ENCODE measurements at regions of chrX and their contacts with region 1.

Region 1: GRCh38 chrX:103175944-103176753 is 38.8 kb upstream of the BEX4 start:
- DNase-seq: no peak
- ATAC-seq: no peak
- H3K4me3 ChIP-seq: no peak overlapping the region
- H3K27ac ChIP-seq: no peak overlapping the region
- H3K4me1 ChIP-seq: no peaks in the 10 kb centered on the region
- H3K27me3 ChIP-seq: peaks cover 0 to 6% (median 4%) of the 10 kb centered on the region in 3 donors
- CTCF ChIP-seq: peak in 4 of 5 experiments; percentile 18 to 56 (median 35)
- POLR2A ChIP-seq: no peak

Region 2: GRCh38 chrX:102950908-102951866 is 225.0 kb before region 1 on chrX:
- in situ Hi-C with region 1: loop called in 2 of 4 experiments (anchors 10 to 25 kb)
- intact Hi-C with region 1: loop called (anchors 5 kb)
- DNase-seq: no peak
- ATAC-seq: no peak
- H3K4me3 ChIP-seq: peak overlapping the region in 1 of 4 donors; percentile 21
- H3K27ac ChIP-seq: no peak overlapping the region
- H3K4me1 ChIP-seq: peaks cover 0 to 4% of the 10 kb centered on the region in 2 donors
- H3K27me3 ChIP-seq: no peaks in the 10 kb centered on the region
- CTCF ChIP-seq: peak in 2 of 5 experiments; percentile 30 to 58
- POLR2A ChIP-seq: no peak

Region 3: DNA sequence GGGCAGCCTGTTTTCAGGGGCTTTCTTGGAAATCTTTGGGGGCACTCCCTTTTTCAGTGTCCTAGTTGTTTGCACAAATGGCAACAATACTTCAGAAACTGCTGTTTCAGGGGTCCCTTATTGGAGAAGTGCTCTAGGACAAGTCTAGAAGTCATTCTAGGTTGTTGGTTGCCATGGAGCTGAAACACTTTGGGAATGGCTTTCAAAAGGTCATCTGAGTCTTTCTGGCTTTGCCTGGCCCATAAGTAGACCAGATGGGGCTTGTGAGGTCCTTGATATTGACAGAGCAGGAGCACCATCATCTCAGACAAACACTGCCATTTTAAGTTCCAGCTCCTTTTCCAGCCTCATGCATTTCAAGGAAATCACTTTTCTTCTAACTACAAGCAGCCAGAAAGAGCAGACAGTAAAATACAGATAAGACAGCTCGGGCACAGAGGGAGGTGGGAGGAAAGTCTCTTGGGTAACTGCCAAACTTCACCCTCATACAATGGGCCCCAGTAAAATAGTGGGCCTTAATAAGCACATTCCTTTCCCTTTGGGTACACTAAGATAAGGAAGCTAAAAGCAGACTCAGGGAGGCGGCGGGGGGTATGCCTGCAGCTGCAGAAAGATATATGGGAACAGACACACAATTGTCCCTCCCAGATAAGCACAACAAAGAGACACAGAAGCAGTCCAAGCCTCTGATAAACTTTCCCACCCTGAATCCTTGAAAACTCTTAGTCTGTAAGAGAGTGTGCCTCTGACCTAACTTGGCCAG is 74.7 kb before region 1 on chrX:
- in situ Hi-C with region 1: no loop called
- intact Hi-C with region 1: no loop called
- DNase-seq: no peak
- ATAC-seq: no peak
- H3K4me3 ChIP-seq: no peak overlapping the region
- H3K27ac ChIP-seq: no peak overlapping the region
- H3K4me1 ChIP-seq: no peaks in the 10 kb centered on the region
- H3K27me3 ChIP-seq: peaks cover 0 to 3% (median 0%) of the 10 kb centered on the region in 3 donors
- CTCF ChIP-seq: no peak
- POLR2A ChIP-seq: no peak

Region 4: DNA sequence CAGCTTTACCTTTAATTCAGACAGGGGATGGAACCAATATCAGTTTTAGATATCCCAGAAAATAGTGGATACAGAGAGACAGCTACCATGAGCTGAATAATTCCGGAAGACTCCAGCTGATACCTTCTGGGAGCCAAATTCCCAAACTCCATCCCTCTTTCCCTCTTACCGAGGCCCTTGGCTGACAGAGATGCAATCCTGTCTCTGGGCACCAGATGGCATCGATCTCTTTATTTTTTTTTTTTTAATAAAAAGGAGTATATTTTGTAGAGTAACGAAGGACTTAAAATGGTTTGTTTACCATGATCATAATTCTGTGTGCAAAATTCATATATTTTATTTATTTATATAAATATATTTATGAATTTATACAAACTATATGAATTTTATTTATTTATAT is 312.2 kb after region 1 on chrX:
- in situ Hi-C with region 1: no loop called
- intact Hi-C with region 1: no loop called
- DNase-seq: no peak
- ATAC-seq: no peak
- H3K4me3 ChIP-seq: no peak overlapping the region
- H3K27ac ChIP-seq: no peak overlapping the region
- H3K4me1 ChIP-seq: no peaks in the 10 kb centered on the region
- H3K27me3 ChIP-seq: no peaks in the 10 kb centered on the region
- CTCF ChIP-seq: no peak
- POLR2A ChIP-seq: no peak

Measured in gastrocnemius medialis (tissue), 4 donors.